Activated CD4-positive, alpha-beta memory T cell treated with anti-CD3 and anti-CD28 coated beads, Interleukin-2, amount 10 ng/mL, durations not matched to agents 7 days and 5 days (primary cell): ENCODE measurements at regions of chr3 and their contacts with region 1.

Region 1: DNA sequence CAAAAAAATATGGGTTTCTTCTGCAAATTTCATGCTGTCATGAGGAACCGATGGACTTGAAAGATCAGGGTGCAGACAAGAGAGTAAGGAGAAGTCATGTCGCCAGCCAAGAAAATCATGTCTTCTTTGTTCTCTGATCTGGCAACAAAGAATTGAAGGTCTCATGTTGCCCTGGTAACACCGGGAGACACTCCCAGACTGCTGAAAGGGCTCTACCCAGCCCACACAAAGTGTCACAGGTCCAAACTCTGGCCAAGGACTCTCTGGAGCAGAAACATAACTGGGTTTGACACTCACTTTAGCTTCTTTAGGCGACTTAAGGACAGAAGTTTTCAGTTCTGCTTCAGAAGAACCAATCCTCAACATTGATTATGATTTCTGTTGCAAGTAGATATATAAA is 42.9 kb downstream of the SIDT1 start:
- DNase-seq: no peak
- H3K4me3 Mint-ChIP-seq: no peak overlapping the region
- H3K27ac Mint-ChIP-seq: no peak overlapping the region
- H3K4me1 Mint-ChIP-seq: peaks cover 5% of the 10 kb centered on the region
- H3K27me3 Mint-ChIP-seq: no peaks in the 10 kb centered on the region

Region 2: DNA sequence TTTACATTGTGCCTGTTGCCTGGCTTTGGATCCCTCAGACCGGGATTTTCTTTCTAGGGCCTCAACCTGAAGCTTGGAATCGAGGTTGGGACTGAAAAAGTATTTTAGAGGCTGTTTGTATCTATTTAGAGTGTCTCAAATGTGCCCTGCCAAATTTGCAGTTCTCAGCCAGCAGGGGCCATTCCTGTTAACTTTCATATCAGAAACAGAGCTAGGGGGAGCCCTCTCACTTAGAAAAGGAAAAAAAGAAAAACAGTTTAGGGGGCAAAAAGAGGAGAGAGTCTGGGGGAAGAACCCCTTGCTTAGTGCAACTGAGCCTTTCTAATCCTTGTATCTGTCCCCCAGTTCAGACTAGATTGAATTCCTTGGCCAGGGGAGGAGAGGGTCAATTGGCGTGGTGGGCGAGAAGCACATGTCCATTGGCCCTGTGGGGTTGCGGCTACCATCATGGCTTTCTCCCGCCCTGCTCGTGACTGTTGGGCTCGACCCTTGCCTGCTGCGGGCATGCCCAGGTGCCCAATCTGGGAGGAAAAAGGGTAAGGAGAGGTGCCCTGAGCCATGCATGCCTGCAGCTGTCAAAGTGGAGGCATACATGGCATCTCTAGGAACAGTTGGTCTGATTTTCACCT is 235.5 kb before region 1 on chr3:
- CTCF ChIA-PET with region 1: no interaction called
- POLR2A ChIA-PET with region 1: no interaction called
- DNase-seq: no peak
- H3K4me3 Mint-ChIP-seq: no peak overlapping the region
- H3K27ac Mint-ChIP-seq: no peak overlapping the region
- H3K4me1 Mint-ChIP-seq: no peaks in the 10 kb centered on the region
- H3K27me3 Mint-ChIP-seq: no peaks in the 10 kb centered on the region

Region 3: DNA sequence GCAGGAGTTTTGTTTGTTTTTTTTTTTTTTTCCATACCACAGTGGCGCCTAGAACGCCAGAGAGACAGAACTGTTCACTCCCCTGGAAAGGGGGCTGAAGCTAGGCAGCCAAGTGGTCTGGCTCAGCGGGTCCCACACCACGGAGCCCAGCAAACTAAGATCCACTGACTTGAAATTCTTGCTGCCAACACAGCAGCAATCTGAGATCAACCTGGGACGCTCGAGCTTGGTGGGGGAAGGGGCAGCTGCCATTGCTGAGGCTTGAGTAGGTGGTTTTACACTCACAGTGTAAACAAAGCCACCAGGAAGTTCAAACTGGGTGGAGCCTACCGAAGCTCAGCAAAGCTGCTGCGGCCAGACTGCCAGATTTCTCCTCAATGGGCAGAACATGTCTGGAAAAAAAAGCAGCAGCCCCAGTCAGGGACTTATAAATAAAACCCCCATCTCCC is 90.0 kb before region 1 on chr3:
- CTCF ChIA-PET with region 1: interaction called, 24 read pairs
- POLR2A ChIA-PET with region 1: no interaction called
- DNase-seq: peak; percentile 26
- H3K4me3 Mint-ChIP-seq: no peak overlapping the region
- H3K27ac Mint-ChIP-seq: peak overlapping the region; percentile 17
- H3K4me1 Mint-ChIP-seq: peaks cover 5% of the 10 kb centered on the region
- H3K27me3 Mint-ChIP-seq: no peaks in the 10 kb centered on the region

Region 4: GRCh38 chr3:113495035-113495434 is 80.2 kb before region 1 on chr3:
- CTCF ChIA-PET with region 1: interaction called, 99 read pairs
- POLR2A ChIA-PET with region 1: interaction called, 5 read pairs
- DNase-seq: peak; percentile 47
- H3K4me3 Mint-ChIP-seq: no peak overlapping the region
- H3K27ac Mint-ChIP-seq: no peak overlapping the region
- H3K4me1 Mint-ChIP-seq: peaks cover 8% of the 10 kb centered on the region
- H3K27me3 Mint-ChIP-seq: no peaks in the 10 kb centered on the region

Region 5: GRCh38 chr3:113514265-113514769 is 60.9 kb before region 1 on chr3:
- CTCF ChIA-PET with region 1: interaction called, 45 read pairs
- POLR2A ChIA-PET with region 1: interaction called, 3 read pairs
- DNase-seq: no peak
- H3K4me3 Mint-ChIP-seq: no peak overlapping the region
- H3K27ac Mint-ChIP-seq: no peak overlapping the region
- H3K4me1 Mint-ChIP-seq: peaks cover 9% of the 10 kb centered on the region
- H3K27me3 Mint-ChIP-seq: peaks cover 23% of the 10 kb centered on the region

Region 6: DNA sequence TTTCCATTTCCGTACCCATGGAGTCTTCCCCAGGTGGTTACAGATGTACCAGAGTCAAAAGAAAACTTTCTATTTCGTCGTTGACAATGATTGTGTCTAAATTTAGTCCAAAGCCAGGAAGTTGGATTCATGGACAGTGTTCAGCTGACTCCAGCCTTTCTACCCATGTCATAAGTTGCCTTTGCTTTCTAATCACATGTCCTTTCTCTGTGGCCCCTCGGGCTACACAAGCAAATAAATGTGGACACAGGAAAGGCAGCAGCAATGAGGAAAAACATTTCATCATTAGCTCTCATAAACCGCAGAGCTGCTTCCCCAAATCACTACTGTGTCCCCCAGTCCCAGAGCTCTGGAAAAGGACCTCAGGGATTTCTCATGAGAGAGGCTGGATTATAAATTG is 39.2 kb after region 1 on chr3:
- CTCF ChIA-PET with region 1: interaction called, 10 read pairs
- POLR2A ChIA-PET with region 1: no interaction called
- DNase-seq: no peak
- H3K4me3 Mint-ChIP-seq: no peak overlapping the region
- H3K27ac Mint-ChIP-seq: no peak overlapping the region
- H3K4me1 Mint-ChIP-seq: no peaks in the 10 kb centered on the region
- H3K27me3 Mint-ChIP-seq: no peaks in the 10 kb centered on the region

Region 7: GRCh38 chr3:113685956-113686754 is 110.9 kb after region 1 on chr3:
- CTCF ChIA-PET with region 1: no interaction called
- POLR2A ChIA-PET with region 1: no interaction called
- DNase-seq: no peak
- H3K4me3 Mint-ChIP-seq: no peak overlapping the region
- H3K27ac Mint-ChIP-seq: no peak overlapping the region
- H3K4me1 Mint-ChIP-seq: no peaks in the 10 kb centered on the region
- H3K27me3 Mint-ChIP-seq: no peaks in the 10 kb centered on the region

Region 8: DNA sequence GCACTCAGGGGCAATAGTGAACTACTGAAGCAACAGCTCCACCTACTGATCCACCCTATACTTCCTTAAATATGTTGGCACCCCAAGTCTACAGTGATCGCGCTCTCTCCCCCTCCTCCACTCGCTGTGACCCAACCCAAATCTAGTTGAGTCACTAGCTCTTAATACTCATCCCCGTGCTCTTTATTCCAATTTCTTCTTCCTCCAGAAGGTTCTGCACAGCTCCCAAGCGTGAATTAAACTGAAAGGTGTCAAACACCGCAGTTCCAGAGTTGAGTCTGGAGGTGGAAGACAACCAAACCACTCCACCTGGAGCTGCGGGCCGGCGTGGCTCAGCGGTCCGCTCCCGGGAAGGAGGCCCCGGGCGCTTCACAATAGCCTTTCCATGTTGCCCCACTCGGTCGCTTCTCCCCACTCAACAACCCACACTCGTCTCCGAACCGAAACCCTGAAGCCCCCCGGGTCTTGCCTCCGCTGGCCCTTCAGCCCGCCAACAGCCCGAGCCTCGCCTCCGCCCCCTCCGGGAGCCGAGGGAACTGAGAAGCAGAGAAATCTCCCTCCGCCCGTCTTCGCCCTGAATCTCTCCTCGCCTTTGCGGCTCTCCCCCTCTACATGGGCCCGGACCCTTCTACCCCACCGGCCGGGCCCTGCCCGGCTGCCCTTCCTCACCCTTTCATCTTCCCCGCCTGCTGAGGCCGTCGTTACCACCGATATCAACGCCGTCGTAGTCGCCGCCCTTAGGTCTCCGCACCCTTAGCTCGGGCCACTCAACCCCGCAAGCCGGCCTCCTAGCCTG is 170.3 kb after region 1 on chr3:
- CTCF ChIA-PET with region 1: interaction called, 17 read pairs
- POLR2A ChIA-PET with region 1: no interaction called
- DNase-seq: peak; percentile 80
- H3K4me3 Mint-ChIP-seq: peak overlapping the region; percentile 98
- H3K27ac Mint-ChIP-seq: peak overlapping the region; percentile 100
- H3K4me1 Mint-ChIP-seq: peaks cover 57% of the 10 kb centered on the region
- H3K27me3 Mint-ChIP-seq: no peaks in the 10 kb centered on the region